ENCODE measurements at regions of chr2 and their contacts with region 1.

Region 1: DNA sequence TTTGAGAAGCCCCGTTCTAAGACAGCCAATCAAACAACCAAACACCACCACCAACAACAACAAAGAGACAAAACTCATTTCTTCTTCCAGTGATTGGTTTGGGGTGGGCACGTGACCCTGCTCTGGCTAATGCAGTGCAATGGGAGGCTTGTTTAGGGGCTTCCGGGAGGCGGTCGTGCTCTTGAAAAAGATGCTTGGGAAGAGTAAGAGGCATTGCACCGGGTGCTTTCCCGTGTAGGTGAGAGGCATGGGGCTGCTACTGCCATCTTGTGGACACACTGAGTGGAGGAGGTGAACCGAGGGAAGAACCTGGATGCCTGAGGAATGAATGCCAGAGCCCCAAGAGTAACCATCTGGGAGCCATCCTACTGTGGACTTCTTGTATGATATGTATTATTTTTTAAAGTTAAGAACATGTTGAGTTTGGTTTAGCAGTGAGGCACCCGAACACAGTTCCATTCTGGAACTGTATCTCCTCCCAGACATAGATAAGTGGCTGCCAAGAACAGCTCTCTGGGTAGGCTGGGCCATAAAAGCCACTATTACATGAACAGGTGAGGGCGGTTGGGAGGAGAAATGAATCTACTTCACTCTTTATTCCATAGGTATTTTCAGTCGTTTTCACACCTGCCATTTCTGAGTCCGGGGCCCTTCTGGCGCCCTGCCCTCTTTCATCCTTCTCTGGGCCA is 19.1 kb upstream of the ARHGAP25 start:
- DNase-seq: peak in 6 of 9 experiments; percentile 16 to 79 (median 60)
- ATAC-seq: peak; percentile 47
- H3K4me3 ChIP-seq: no peak overlapping the region
- H3K4me3 Mint-ChIP-seq: no peak overlapping the region
- H3K27ac ChIP-seq: no peak overlapping the region
- H3K27ac Mint-ChIP-seq: peak overlapping the region; percentile 11
- H3K4me1 ChIP-seq: peaks cover 53% of the 10 kb centered on the region
- H3K4me1 Mint-ChIP-seq: peaks cover 62% of the 10 kb centered on the region
- H3K27me3 ChIP-seq: peaks cover 0 to 3% of the 10 kb centered on the region in 2 experiments
- H3K27me3 Mint-ChIP-seq: no peaks in the 10 kb centered on the region
- CTCF ChIP-seq: no peak

Region 2: DNA sequence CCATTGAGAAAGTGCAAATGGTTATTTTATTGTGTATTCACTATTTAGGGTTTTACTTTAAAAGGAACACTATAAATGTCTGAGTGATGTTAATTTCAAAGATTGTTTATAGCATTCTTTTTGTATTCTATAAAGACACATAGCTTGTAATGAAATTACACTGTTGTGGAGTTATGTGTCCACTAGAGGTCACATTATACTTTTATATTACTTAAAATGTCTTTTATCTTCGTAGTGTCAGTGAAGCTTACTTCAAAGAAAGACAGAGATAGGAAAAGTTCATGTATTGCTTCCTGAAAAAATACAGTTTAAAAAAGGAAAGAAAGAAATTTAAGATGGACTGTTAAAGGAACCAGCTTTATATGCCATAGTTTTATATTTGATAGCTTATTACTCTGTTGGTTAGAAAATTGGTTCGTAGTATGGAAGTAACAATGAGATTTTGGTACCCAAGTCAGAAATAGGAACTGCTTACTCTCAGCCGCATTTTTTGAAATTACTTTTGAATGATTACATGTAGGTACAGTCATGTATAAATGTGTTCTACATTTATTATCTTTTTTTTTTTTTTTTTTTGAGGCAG is 227.6 kb before region 1 on chr2:
- CTCF ChIA-PET with region 1: no interaction called
- POLR2A ChIA-PET with region 1: no interaction called
- intact Hi-C with region 1: loop called in 1 of 2 experiments (anchors 5 kb)
- DNase-seq: peak in 2 of 9 experiments; percentile 36 to 54
- ATAC-seq: peak; percentile 71
- H3K4me3 ChIP-seq: no peak overlapping the region
- H3K4me3 Mint-ChIP-seq: no peak overlapping the region
- H3K27ac ChIP-seq: no peak overlapping the region
- H3K27ac Mint-ChIP-seq: no peak overlapping the region
- H3K4me1 ChIP-seq: no peaks in the 10 kb centered on the region
- H3K4me1 Mint-ChIP-seq: peaks cover 3% of the 10 kb centered on the region
- H3K27me3 ChIP-seq: no peaks in the 10 kb centered on the region
- H3K27me3 Mint-ChIP-seq: no peaks in the 10 kb centered on the region
- CTCF ChIP-seq: peak; percentile 65

Region 3: DNA sequence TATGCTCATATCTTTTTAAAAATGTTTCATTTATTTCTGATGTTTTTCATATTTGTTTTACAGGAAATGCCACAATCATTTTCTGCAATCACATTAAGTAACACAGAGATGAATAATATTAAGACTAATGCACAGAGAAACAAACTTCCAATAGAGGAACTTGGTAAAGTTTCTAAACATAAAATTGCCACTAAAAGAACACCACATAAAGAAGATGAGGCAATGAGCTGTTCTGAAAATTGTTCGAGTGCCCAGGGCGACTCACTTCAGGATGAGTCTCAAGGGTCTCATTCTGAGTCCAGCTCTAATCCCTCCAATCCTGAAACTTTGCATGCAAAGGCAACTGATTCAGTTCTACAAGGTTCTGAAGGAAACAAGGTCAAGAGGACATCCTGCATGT is 177.7 kb before region 1 on chr2:
- CTCF ChIA-PET with region 1: no interaction called
- POLR2A ChIA-PET with region 1: no interaction called
- intact Hi-C with region 1: no loop called
- DNase-seq: no peak
- ATAC-seq: no peak
- H3K4me3 ChIP-seq: no peak overlapping the region
- H3K4me3 Mint-ChIP-seq: no peak overlapping the region
- H3K27ac ChIP-seq: no peak overlapping the region
- H3K27ac Mint-ChIP-seq: no peak overlapping the region
- H3K4me1 ChIP-seq: no peaks in the 10 kb centered on the region
- H3K4me1 Mint-ChIP-seq: no peaks in the 10 kb centered on the region
- H3K27me3 ChIP-seq: no peaks in the 10 kb centered on the region
- H3K27me3 Mint-ChIP-seq: no peaks in the 10 kb centered on the region
- CTCF ChIP-seq: no peak

Region 4: GRCh38 chr2:68726608-68727367 is 11.3 kb after region 1 on chr2:
- CTCF ChIA-PET with region 1: interaction called, 70 read pairs
- POLR2A ChIA-PET with region 1: interaction called, 31 read pairs
- intact Hi-C with region 1: loop called in 1 of 2 experiments (anchors 1 kb)
- DNase-seq: peak; percentile 48 to 92 (median 81)
- ATAC-seq: peak; percentile 98
- H3K4me3 ChIP-seq: no peak overlapping the region
- H3K4me3 Mint-ChIP-seq: peak overlapping the region; percentile 22
- H3K27ac ChIP-seq: peak overlapping the region in 1 of 2 experiments; percentile 60
- H3K27ac Mint-ChIP-seq: peak overlapping the region; percentile 82
- H3K4me1 ChIP-seq: peaks cover 37% of the 10 kb centered on the region
- H3K4me1 Mint-ChIP-seq: peaks cover 54% of the 10 kb centered on the region
- H3K27me3 ChIP-seq: no peaks in the 10 kb centered on the region
- H3K27me3 Mint-ChIP-seq: no peaks in the 10 kb centered on the region
- CTCF ChIP-seq: no peak